ENCODE measurements at regions of chr10 and their contacts with region 1.

Region 1: GRCh38 chr10:15585303-15585715 is 134.4 kb downstream of the ITGA8 start:
- DNase-seq: peak in 9 of 10 donors; percentile 4 to 67 (median 46)
- H3K4me3 ChIP-seq: no peak overlapping the region
- H3K27ac ChIP-seq: no peak overlapping the region
- H3K27me3 ChIP-seq: no peaks in the 10 kb centered on the region
- CTCF ChIP-seq: peak; percentile 40 to 84 (median 70)

Region 2: DNA sequence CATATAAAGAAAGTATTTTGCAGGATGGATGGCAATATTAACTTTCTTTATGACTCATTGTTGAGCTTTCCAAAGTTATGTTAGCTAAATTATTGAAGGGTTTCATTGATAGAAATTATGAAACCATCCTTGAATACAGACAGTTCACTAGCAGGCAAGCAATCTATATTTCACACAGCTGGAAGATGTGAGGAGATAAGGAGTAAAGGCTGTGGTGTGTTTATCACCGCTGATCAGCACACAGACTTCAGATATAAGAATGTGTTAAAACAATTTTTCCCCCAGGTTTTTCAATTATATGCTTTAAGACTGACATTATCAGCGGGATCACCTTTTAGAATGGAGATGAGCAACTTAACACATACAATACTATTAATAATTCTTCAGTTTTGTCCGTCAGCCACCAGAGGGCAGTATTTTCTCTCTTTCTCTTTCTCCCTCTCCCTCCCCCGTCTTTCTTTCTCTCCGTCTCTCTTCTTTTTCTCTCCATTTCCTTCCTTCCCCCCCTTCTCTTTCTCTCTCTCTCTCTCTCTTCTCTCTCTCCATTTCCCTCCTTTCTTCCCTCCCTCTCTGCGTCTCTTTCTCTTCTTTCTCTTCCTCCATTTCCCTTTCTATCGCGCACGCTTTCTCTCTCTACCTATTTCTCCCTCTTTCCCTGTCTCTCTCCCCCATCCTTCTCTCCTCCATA is 151.3 kb before region 1 on chr10:
- intact Hi-C with region 1: loop called in 1 of 2 experiments (anchors 10 kb)
- DNase-seq: peak in 1 of 10 donors; percentile 66
- H3K4me3 ChIP-seq: peak overlapping the region in 51 of 59 donors; percentile 3 to 60 (median 43)
- H3K27ac ChIP-seq: no peak overlapping the region
- H3K27me3 ChIP-seq: peaks cover 0 to 6% (median 0%) of the 10 kb centered on the region in 45 donors
- CTCF ChIP-seq: peak; percentile 74 to 97 (median 84)

Region 3: GRCh38 chr10:15485684-15486316 is 99.5 kb before region 1 on chr10:
- intact Hi-C with region 1: no loop called
- DNase-seq: no peak
- H3K4me3 ChIP-seq: no peak overlapping the region
- H3K27ac ChIP-seq: no peak overlapping the region
- H3K27me3 ChIP-seq: peaks cover 0 to 5% (median 0%) of the 10 kb centered on the region in 45 donors
- CTCF ChIP-seq: no peak

Region 4: GRCh38 chr10:15719899-15720634 is 134.8 kb after region 1 on chr10 and contains the start of gene ITGA8:
- intact Hi-C with region 1: loop called (anchors 5 to 10 kb)
- DNase-seq: no peak
- H3K4me3 ChIP-seq: peak within 1 kb of the TSS in 58 of 59 donors; percentile 1 to 65 (median 51)
- H3K27ac ChIP-seq: peak within 1 kb of the TSS in 27 of 59 donors; percentile 2 to 83 (median 45)
- H3K27me3 ChIP-seq: peaks cover 0 to 47% (median 25%) of the 10 kb centered on the region in 45 donors
- CTCF ChIP-seq: peak in 30 of 56 donors; percentile 7 to 44 (median 22)
- total RNA-seq, gene ITGA8: 3.1 to 17.0 (median 7.8) TPM

Region 5: DNA sequence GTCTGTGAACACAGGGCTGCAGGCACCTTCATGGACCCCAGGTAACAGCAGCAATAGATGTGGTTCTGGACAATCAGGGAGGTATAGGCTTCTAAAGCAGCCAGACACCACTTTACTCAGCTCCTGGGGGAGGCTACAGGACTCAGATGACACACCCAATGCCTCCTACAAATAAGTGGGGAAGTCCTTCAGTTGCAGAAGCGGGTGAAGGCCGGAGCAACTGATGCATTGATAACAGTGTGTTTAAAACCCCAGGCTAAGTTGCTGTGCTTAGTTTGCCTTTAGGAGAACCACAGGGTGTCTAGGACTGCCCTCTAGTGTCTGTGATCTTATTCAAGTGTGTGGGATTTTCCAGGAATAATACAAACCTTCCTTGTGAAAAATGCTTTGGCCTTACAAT is 140.3 kb after region 1 on chr10:
- intact Hi-C with region 1: loop called in 1 of 2 experiments (anchors 5 kb)
- DNase-seq: peak in 1 of 10 donors; percentile 12
- H3K4me3 ChIP-seq: no peak overlapping the region
- H3K27ac ChIP-seq: no peak overlapping the region
- H3K27me3 ChIP-seq: peaks cover 0 to 6% (median 0%) of the 10 kb centered on the region in 45 donors
- CTCF ChIP-seq: peak in 55 of 56 donors; percentile 28 to 79 (median 61)

Region 6: GRCh38 chr10:15764892-15765454 is 179.7 kb after region 1 on chr10:
- intact Hi-C with region 1: no loop called
- DNase-seq: no peak
- H3K4me3 ChIP-seq: no peak overlapping the region
- H3K27ac ChIP-seq: no peak overlapping the region
- H3K27me3 ChIP-seq: no peaks in the 10 kb centered on the region
- CTCF ChIP-seq: no peak